ENCODE measurements at regions of chr7 and their contacts with region 1.

Region 1: DNA sequence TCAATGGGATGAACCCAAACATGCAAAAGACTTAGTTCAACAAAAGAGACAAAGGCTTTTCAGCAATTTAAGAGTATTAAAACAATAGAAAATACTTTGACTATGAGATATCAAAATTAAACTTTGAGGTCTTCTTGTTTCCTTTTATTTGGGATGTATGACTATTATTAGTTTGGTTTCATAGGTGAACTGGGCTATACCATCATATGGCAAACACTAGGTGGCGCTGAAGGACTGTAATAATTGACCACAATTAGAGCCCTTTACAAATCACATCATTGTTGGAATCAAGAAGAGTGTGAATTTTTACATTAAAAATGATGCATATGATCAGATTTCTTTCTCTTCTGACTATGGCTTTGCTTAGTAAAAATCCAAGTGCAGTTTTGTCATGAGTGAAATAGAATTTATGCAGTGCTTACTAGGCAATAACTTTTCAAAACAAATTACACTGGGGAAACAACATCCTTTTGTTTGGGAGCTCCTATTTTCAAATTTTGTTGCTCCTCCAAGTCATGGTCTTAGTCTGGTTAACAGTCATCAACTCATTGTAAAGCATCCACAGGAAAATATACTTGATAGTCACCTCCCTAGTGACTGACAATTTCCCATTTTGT is 14.7 kb upstream of the NXPH1 start:
- DNase-seq: peak; percentile 34
- ATAC-seq: peak in 1 of 2 donors; percentile 51

Region 2: DNA sequence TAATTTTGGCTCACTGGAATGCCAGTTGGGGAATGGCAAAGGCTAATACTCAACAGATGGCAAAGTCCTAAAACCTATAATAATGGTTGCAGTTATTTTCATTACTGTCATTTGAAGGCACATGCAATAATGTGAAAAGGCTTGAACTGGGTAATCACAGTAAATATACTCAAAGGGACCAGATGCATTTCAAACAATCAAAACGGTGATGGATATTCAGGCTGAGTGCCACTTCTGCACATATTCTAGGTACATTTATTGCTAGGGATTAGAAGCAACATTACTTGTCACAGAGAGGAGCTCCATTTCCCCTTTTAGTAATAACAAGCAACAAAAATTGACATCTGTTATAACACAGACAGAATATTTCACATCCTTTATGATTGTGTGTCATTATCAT is 186.5 kb after region 1 on chr7:
- intact Hi-C with region 1: no loop called
- DNase-seq: no peak
- ATAC-seq: no peak

Region 3: GRCh38 chr7:8724080-8724718 is 305.5 kb after region 1 on chr7:
- intact Hi-C with region 1: loop called in 1 of 2 experiments (anchors 5 kb)
- DNase-seq: no peak
- ATAC-seq: no peak